ENCODE measurements at regions of chr12 and their contacts with region 1.

Region 1: DNA sequence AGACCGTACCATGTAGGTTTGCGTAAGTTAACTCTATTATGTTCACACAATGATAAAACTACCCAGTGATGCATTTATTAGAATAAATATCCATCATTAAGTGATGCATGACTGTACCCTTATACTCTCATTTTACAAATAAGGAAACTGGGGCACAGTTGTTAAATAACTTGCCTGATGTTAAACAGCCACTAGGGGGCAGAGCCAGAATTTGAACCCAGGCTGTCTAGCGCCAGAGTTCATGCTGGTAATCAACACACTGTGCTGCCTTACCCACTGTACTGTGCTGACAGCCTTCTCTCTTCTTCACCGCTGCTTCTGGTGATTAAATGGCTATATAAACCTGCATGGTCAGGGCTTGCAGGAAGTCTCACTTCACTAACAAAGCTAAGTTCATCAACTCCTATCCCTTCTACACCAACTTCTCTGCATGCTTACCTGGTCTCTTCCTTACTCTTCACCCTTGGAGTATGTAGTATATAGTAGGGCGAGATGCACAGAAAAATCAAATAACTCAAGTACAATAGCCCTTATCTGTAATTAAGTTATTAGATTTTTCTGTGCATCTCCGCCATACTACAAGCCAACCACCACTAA is 43.6 kb upstream of the APPL2 start:
- DNase-seq: peak in 2 of 10 donors; percentile 5 to 16

Region 2: GRCh38 chr12:105382771-105383622 is 103.4 kb after region 1 on chr12:
- intact Hi-C with region 1: loop called (anchors 2 kb)
- DNase-seq: no peak